MCF 10A (cell line): ENCODE measurements at regions of chr16 and their contacts with region 1.

Region 1: DNA sequence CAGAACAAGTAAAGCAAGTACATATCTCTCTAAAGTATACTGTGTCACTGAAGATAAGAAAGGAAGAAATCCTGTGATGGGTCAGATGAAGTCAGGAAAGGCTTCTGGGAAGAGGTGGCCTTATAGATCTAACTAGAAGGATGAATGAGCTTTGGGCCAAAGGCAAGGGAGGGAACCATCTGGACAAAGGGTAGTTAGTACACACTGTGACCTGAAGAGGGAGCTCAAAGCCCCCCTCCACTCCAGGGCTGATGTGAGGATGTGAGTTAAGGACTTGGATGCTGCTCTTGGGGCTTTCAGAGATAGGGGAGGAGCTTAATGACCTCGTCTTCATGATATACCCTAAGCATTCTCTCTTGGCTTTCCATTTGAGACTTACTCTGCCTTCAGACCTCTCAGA is 185.3 kb upstream of the CACNG3 start:
- DNase-seq: peak; percentile 65
- H3K4me3 Mint-ChIP-seq: no peak overlapping the region
- H3K27ac Mint-ChIP-seq: no peak overlapping the region
- H3K4me1 Mint-ChIP-seq: peaks cover under 1% of the 10 kb centered on the region
- H3K27me3 Mint-ChIP-seq: peaks cover 25% of the 10 kb centered on the region
- CTCF ChIP-seq: peak; percentile 65

Region 2: GRCh38 chr16:24054741-24055491 is 15.9 kb before region 1 on chr16:
- CTCF ChIA-PET with region 1: interaction called, 22 read pairs
- POLR2A ChIA-PET with region 1: no interaction called
- intact Hi-C with region 1: no loop called
- DNase-seq: no peak
- H3K4me3 Mint-ChIP-seq: no peak overlapping the region
- H3K27ac Mint-ChIP-seq: no peak overlapping the region
- H3K4me1 Mint-ChIP-seq: no peaks in the 10 kb centered on the region
- H3K27me3 Mint-ChIP-seq: peaks cover 74% of the 10 kb centered on the region
- CTCF ChIP-seq: no peak

Region 3: DNA sequence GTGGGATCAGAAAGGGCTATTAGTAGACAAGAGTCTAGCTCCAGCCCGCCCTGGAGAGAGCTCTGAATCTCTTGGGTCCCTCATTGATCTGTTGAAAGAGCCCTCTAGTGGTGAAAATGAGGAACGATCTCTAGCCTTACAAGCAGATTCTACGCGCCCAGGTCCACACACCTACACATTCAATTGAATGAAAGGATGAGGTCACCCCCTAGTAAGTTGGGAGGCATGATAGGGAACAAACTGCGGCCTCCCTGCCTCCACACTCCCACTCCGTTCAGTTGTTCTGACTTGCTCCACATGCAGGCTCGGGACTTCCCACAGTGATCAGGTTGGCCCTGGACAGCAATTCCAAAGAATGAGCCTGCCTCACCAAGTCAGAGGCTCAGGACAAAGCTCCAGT is 182.3 kb after region 1 on chr16:
- CTCF ChIA-PET with region 1: interaction called, 28 read pairs
- POLR2A ChIA-PET with region 1: no interaction called
- intact Hi-C with region 1: loop called (anchors 2 kb)
- DNase-seq: peak; percentile 60
- H3K4me3 Mint-ChIP-seq: no peak overlapping the region
- H3K27ac Mint-ChIP-seq: no peak overlapping the region
- H3K4me1 Mint-ChIP-seq: peaks cover 6% of the 10 kb centered on the region
- H3K27me3 Mint-ChIP-seq: peaks cover 52% of the 10 kb centered on the region
- CTCF ChIP-seq: peak; percentile 61

Region 4: DNA sequence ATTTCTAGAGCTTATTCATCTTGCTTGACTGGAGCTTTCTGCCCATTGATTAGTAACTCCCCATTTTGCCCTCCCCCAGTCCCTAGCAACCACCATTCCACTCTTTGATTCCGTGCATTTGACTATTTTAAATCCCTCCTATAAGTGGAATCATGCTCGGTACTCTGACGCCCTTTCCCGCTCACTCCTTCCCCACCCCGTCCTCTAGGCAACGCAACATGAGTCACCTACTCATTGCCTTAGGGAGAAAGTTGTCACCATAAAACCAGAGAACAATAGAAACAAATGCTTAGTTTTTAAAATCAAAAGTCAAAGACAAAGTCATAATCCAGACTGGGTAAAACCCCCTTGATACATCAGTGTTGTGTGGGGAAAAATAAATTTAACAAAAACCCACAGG is 423.0 kb after region 1 on chr16:
- CTCF ChIA-PET with region 1: interaction called, 31 read pairs
- POLR2A ChIA-PET with region 1: no interaction called
- intact Hi-C with region 1: loop called (anchors 1 kb)
- DNase-seq: peak; percentile 81
- H3K4me3 Mint-ChIP-seq: peak overlapping the region; percentile 28
- H3K27ac Mint-ChIP-seq: peak overlapping the region; percentile 75
- H3K4me1 Mint-ChIP-seq: peaks cover 19% of the 10 kb centered on the region
- H3K27me3 Mint-ChIP-seq: no peaks in the 10 kb centered on the region
- CTCF ChIP-seq: no peak

Region 5: DNA sequence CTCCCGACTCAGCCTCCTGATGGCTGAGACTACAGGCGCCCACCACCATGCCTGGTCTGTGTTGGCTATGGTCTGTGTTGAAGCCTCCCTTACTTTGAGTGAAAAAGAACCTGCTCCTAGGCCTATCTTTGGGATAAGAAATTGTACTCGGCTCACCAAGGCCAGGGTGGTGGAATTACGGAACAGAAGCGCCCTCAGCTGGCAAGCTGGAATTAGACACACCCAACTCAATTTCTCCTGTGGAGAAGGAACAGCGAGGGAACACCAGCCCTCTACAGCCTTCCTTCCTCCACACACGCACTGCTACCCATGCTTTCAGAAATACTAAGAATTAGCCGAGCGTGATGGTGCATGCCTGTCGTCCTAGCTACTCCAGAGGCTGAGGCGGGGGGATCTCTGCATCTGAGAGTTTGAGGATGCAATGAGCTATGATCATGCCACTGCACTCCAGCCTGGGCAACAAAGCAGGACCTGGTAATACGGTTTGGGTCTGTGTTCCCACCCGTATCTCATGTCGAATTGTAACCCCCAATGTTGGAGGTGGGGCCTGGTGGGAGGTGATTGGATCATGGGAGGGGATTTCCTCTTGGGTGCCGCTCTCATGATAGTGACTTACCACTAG is 428.5 kb after region 1 on chr16:
- CTCF ChIA-PET with region 1: interaction called, 31 read pairs
- POLR2A ChIA-PET with region 1: interaction called, 3 read pairs
- intact Hi-C with region 1: loop called (anchors 1 kb)
- DNase-seq: peak; percentile 66
- H3K4me3 Mint-ChIP-seq: no peak overlapping the region
- H3K27ac Mint-ChIP-seq: no peak overlapping the region
- H3K4me1 Mint-ChIP-seq: peaks cover 7% of the 10 kb centered on the region
- H3K27me3 Mint-ChIP-seq: no peaks in the 10 kb centered on the region
- CTCF ChIP-seq: peak; percentile 73